Naive thymus-derived CD8-positive, alpha-beta T cell (primary cell): ENCODE measurements at regions of chr19 and their contacts with region 1.

Region 1: DNA sequence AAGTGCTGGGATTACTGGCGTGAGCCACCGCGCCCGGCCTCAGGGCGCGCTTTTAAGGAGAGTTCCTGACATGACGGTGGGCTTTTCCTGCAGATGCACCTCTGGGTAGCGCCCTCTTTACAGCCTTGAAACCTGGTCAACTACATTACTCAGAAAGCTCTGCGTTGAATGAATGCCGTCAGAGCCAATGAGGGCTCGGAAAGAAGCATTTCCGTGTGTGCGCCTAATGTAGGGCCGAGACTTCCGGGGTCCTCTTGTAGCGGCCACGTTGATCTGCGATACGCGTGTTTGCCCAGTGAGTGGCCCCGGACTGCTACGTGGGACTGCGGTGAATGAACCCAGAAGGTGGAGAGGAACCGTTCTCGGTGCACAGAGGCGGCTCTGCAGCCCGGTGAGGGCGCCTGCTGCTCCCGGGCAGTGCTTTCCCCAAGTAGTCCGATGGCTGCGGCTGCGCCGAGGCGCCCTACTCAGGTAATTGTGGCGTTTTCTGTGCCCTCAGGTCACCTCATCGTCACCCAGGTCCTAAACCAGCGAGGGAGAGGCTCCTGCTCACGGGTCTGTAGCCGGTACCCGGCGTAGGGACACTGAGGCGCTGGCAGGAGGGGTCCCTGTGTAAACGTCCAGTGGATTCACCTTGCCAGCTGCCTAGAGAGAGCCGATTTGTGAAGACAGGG is 4.9 kb upstream of the ZNF552 start:
- DNase-seq: peak; percentile 57 to 91 (median 82)
- ATAC-seq: peak; percentile 86
- H3K4me3 Mint-ChIP-seq: peak overlapping the region; percentile 94 to 99 (median 98)
- H3K27ac Mint-ChIP-seq: peak overlapping the region; percentile 94 to 99 (median 99)
- H3K4me1 Mint-ChIP-seq: peaks cover 36 to 69% (median 60%) of the 10 kb centered on the region in 4 donors
- H3K27me3 Mint-ChIP-seq: no peaks in the 10 kb centered on the region

Region 2: GRCh38 chr19:57191141-57192076 is 628.2 kb before region 1 on chr19 and contains the start of gene ZNF264:
- POLR2A ChIA-PET with region 1: interaction called, 11 read pairs
- DNase-seq: peak; percentile 80 to 94 (median 86)
- ATAC-seq: peak; percentile 95 to 96
- H3K4me3 Mint-ChIP-seq: peak within 1 kb of the TSS; percentile 87 to 95 (median 94)
- H3K27ac Mint-ChIP-seq: peak within 1 kb of the TSS; percentile 94 to 98 (median 96)
- H3K4me1 Mint-ChIP-seq: peaks cover 17 to 37% (median 32%) of the 10 kb centered on the region in 4 donors
- H3K27me3 Mint-ChIP-seq: peaks cover 5 to 11% (median 6%) of the 10 kb centered on the region in 5 donors
- polyA plus RNA-seq, gene ZNF264: 21.7 to 30.6 (median 29.2) TPM

Region 3: GRCh38 chr19:57802269-57802668 is 17.3 kb before region 1 on chr19:
- POLR2A ChIA-PET with region 1: interaction called, 10 read pairs
- DNase-seq: no peak
- ATAC-seq: peak in 1 of 2 donors; percentile 41
- H3K4me3 Mint-ChIP-seq: peak overlapping the region in 1 of 10 donors; percentile 29
- H3K27ac Mint-ChIP-seq: peak overlapping the region in 6 of 10 donors; percentile 27 to 85 (median 44)
- H3K4me1 Mint-ChIP-seq: peaks cover 15 to 41% (median 33%) of the 10 kb centered on the region in 4 donors
- H3K27me3 Mint-ChIP-seq: no peaks in the 10 kb centered on the region

Region 4: GRCh38 chr19:57850553-57851017 is 31.0 kb after region 1 on chr19:
- POLR2A ChIA-PET with region 1: interaction called, 13 read pairs
- DNase-seq: no peak
- ATAC-seq: no peak
- H3K4me3 Mint-ChIP-seq: peak overlapping the region; percentile 88 to 96 (median 95)
- H3K27ac Mint-ChIP-seq: peak overlapping the region; percentile 90 to 98 (median 97)
- H3K4me1 Mint-ChIP-seq: peaks cover 18 to 39% (median 26%) of the 10 kb centered on the region in 4 donors
- H3K27me3 Mint-ChIP-seq: no peaks in the 10 kb centered on the region

Region 5: GRCh38 chr19:58033741-58034471 is 214.3 kb after region 1 on chr19 and contains the start of gene ZSCAN1:
- POLR2A ChIA-PET with region 1: no interaction called
- DNase-seq: peak in 7 of 10 donors; percentile 2 to 89 (median 42)
- ATAC-seq: peak; percentile 68 to 91
- H3K4me3 Mint-ChIP-seq: peak within 1 kb of the TSS in 8 of 10 donors; percentile 3 to 78 (median 59)
- H3K27ac Mint-ChIP-seq: peak within 1 kb of the TSS in 3 of 10 donors; percentile 5 to 74 (median 26)
- H3K4me1 Mint-ChIP-seq: peaks cover 0 to 10% (median 4%) of the 10 kb centered on the region in 4 donors
- H3K27me3 Mint-ChIP-seq: peaks cover 18 to 47% (median 33%) of the 10 kb centered on the region in 5 donors
- polyA plus RNA-seq, gene ZSCAN1: not detected